Activated T-helper 1 cell treated with anti-CD3 and anti-CD28 coated beads, Interleukin-12 subunit alpha, Interleukin-12 subunit beta, Interleukin-2, Interleukin-4 antibody, amounts not matched to agents 30 ng/mL and 10 ng/mL and 1 ng/mL, durations not matched to agents 14 hours and 24 hours and 36 hours (primary cell): ENCODE measurements at regions of chr5 and their contacts with region 1.

Region 1: DNA sequence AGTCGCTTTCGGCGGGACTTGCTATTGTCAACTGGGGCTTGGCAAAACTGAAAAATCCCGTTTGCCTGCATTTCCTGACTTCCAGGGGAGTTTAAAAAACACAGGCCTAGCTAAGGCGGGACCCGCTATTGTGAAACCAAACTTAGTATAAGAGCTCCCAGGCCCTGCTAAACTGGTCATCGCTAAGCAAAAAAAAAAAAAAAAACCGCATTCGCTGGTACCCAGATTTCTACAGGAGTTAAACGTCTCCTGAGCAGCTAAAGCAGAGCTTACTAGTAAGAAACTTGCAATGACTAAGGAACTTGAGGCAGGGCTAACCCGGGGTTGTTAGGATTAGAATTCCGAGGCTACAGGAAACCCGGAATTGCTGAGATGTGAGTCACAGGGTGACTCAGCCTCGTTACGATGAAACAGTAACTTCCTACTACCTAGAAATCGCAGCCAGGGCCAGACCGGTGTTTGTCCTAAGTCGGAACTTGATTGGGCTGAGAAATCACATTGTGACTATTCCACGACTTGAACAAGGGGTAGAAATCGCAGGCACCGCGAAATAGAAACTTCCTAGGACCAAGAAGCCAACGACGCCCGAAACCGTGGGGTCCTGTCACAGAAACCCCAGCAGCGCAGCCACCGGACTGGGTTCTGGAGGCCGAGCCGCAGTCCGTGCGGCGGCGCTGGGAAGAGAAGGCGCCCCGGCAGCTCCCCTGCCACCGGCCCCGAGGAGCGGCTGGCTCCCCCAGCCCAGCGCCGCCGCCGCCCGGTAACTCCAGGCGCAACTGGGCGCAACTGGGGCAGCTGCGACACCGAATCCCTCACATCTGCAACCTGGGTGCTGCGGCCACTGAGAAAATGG is 89.5 kb downstream of the ANXA2R start:
- DNase-seq: peak; percentile 60
- H3K4me3 Mint-ChIP-seq: peak overlapping the region; percentile 88
- H3K27ac Mint-ChIP-seq: peak overlapping the region; percentile 97
- H3K4me1 Mint-ChIP-seq: peaks cover 37% of the 10 kb centered on the region
- H3K27me3 Mint-ChIP-seq: peaks cover 8% of the 10 kb centered on the region

Region 2: GRCh38 chr5:41869739-41870626 is 1080.7 kb before region 1 on chr5 and contains the start of gene OXCT1:
- intact Hi-C with region 1: loop called (anchors 1 kb)
- DNase-seq: peak; percentile 92
- H3K4me3 Mint-ChIP-seq: peak within 1 kb of the TSS; percentile 94
- H3K27ac Mint-ChIP-seq: peak within 1 kb of the TSS; percentile 96
- H3K4me1 Mint-ChIP-seq: peaks cover 56% of the 10 kb centered on the region
- H3K27me3 Mint-ChIP-seq: no peaks in the 10 kb centered on the region
- total RNA-seq, gene OXCT1: 84.4 and 85.1 TPM in 2 replicates

Region 3: GRCh38 chr5:42720251-42720650 is 230.4 kb before region 1 on chr5:
- intact Hi-C with region 1: no loop called
- DNase-seq: no peak
- H3K4me3 Mint-ChIP-seq: peak overlapping the region; percentile 17
- H3K27ac Mint-ChIP-seq: no peak overlapping the region
- H3K4me1 Mint-ChIP-seq: peaks cover 21% of the 10 kb centered on the region
- H3K27me3 Mint-ChIP-seq: peaks cover 24% of the 10 kb centered on the region

Region 4: GRCh38 chr5:42994246-42995151 is 43.8 kb after region 1 on chr5:
- intact Hi-C with region 1: loop called (anchors 1 kb)
- DNase-seq: peak; percentile 84
- H3K4me3 Mint-ChIP-seq: peak overlapping the region; percentile 98
- H3K27ac Mint-ChIP-seq: peak overlapping the region; percentile 100
- H3K4me1 Mint-ChIP-seq: peaks cover 60% of the 10 kb centered on the region
- H3K27me3 Mint-ChIP-seq: peaks cover 3% of the 10 kb centered on the region

Region 5: DNA sequence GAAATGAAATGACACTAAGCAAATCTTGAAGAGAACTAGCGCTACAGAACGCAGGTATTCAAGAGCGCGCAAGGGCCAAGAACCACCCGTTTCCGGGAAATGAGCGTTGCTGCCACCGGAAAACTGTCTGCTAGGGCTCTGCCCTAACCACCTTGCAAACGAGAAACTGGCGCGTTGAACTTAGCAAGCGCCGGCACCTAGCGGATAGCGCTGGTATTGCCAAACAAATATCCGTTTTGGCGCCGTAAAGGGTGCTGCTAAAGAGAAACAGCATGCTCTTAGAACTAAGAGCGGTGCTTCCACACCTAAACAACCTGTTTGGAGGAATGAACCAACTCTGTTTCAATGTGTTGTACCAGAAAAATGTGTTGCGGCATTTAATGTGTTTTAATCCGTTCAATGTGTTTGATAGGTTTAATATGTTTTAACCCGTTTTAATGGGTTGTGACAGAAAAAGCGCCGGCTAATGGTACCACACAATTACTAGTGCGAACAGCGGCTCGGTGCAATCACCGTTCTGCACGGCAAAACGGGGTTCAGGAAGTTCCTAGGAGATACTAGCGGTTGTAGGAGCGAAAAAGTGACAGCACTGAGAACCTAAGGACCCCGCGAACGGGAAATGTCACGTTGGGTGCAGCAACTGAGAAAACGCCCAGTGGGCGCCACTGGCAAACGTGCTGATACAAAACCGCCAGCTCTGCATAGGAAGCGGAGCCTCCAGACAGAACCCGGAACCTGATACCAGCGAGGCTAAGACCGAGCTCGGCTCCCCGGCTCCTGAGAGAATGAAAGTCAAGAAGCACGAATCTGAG is 89.8 kb after region 1 on chr5 and contains the start of gene ANXA2R:
- intact Hi-C with region 1: loop called (anchors 1 kb)
- DNase-seq: peak; percentile 93
- H3K4me3 Mint-ChIP-seq: peak within 1 kb of the TSS; percentile 82
- H3K27ac Mint-ChIP-seq: peak within 1 kb of the TSS; percentile 86
- H3K4me1 Mint-ChIP-seq: peaks cover 59% of the 10 kb centered on the region
- H3K27me3 Mint-ChIP-seq: no peaks in the 10 kb centered on the region
- total RNA-seq, gene ANXA2R: 0.88 and 0.93 TPM in 2 replicates

Region 6: DNA sequence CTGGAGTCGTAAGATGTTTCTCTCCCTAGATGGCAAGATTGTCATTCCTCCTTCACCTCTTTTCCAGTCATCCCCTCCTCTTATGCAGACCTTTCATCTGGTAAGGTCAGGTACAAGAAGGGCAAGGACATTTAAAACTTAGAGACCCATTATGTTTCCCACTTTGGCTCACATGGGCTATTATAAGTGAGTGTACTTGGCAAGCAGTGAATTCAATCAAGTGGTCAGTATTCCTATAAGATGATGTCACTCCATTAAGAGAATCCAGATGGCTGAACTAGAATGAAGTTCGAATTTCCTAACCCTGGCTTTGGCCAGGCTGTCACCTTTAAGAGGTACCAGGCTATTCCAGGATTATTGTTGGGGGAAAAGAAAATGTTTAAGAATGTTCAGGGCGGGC is 202.3 kb after region 1 on chr5:
- intact Hi-C with region 1: no loop called
- DNase-seq: no peak
- H3K4me3 Mint-ChIP-seq: no peak overlapping the region
- H3K27ac Mint-ChIP-seq: no peak overlapping the region
- H3K4me1 Mint-ChIP-seq: peaks cover 9% of the 10 kb centered on the region
- H3K27me3 Mint-ChIP-seq: no peaks in the 10 kb centered on the region

Region 7: GRCh38 chr5:43556857-43557542 is 606.3 kb after region 1 on chr5 and contains the start of gene PAIP1:
- intact Hi-C with region 1: loop called (anchors 5 kb)
- DNase-seq: peak; percentile 83
- H3K4me3 Mint-ChIP-seq: peak within 1 kb of the TSS; percentile 92
- H3K27ac Mint-ChIP-seq: peak within 1 kb of the TSS; percentile 93
- H3K4me1 Mint-ChIP-seq: peaks cover 10% of the 10 kb centered on the region
- H3K27me3 Mint-ChIP-seq: no peaks in the 10 kb centered on the region
- total RNA-seq, gene PAIP1: 59.0 and 60.8 TPM in 2 replicates